BJ (cell line): ENCODE measurements at regions of chr10 and their contacts with region 1.

Region 1: GRCh38 chr10:101214446-101215396 is 14.5 kb downstream of the LBX1 start:
- DNase-seq: no peak
- H3K4me3 ChIP-seq: no peak overlapping the region
- H3K27me3 ChIP-seq: peaks cover 48% of the 10 kb centered on the region
- CTCF ChIP-seq: peak; percentile 93

Region 2: DNA sequence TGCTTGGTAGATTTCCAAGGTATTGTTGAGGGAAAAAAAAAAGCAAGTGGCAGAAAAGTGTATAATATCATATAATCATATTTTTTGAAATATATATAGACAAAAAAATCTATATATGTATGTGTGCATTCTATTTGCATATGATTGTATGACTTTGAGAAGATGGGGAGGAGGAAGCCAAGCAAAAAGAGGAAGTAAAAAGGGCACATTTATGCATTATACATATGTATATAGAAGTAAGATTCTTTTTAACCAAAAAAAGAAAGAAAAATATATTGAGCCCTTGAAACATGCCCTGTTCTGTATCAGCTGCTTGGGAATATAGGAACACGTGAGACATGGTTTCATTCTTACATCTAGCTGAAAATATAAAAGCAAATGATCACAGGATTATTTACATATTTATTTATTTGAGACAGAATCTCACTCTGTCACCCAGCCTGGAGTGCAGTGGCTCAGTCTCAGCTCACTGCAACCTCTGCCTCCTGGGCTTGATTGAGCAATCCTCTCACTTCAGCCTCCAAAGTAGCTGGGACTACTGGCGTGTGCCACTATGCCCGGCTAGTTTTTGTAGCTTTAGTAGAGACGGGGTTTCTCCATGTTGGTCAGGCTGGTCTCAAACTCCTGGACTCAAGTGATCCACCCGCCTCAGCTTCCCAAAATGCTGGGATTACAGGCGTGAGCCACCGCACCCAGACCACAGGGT is 320.0 kb before region 1 on chr10:
- CTCF ChIA-PET with region 1: no interaction called
- POLR2A ChIA-PET with region 1: no interaction called
- DNase-seq: no peak
- H3K4me3 ChIP-seq: no peak overlapping the region
- H3K27me3 ChIP-seq: no peaks in the 10 kb centered on the region
- CTCF ChIP-seq: no peak

Region 3: GRCh38 chr10:101120884-101121653 is 93.7 kb before region 1 on chr10:
- CTCF ChIA-PET with region 1: no interaction called
- POLR2A ChIA-PET with region 1: no interaction called
- DNase-seq: no peak
- H3K4me3 ChIP-seq: peak overlapping the region; percentile 16
- H3K27me3 ChIP-seq: peaks cover 60% of the 10 kb centered on the region
- CTCF ChIP-seq: no peak

Region 4: GRCh38 chr10:101161494-101162299 is 53.0 kb before region 1 on chr10:
- CTCF ChIA-PET with region 1: interaction called, 13 read pairs
- POLR2A ChIA-PET with region 1: no interaction called
- DNase-seq: peak; percentile 14
- H3K4me3 ChIP-seq: peak overlapping the region; percentile 38
- H3K27me3 ChIP-seq: peaks cover 12% of the 10 kb centered on the region; the same call in 1 of the 2 replicates
- CTCF ChIP-seq: peak; percentile 95

Region 5: GRCh38 chr10:101238732-101239105 is 24.0 kb after region 1 on chr10:
- CTCF ChIA-PET with region 1: interaction called, 14 read pairs
- POLR2A ChIA-PET with region 1: no interaction called
- DNase-seq: no peak
- H3K4me3 ChIP-seq: no peak overlapping the region
- H3K27me3 ChIP-seq: peaks cover 49% of the 10 kb centered on the region
- CTCF ChIP-seq: peak; percentile 22; the same call in 1 of the 2 replicates

Region 6: GRCh38 chr10:101291331-101292193 is 76.8 kb after region 1 on chr10:
- CTCF ChIA-PET with region 1: interaction called, 33 read pairs
- POLR2A ChIA-PET with region 1: no interaction called
- DNase-seq: no peak
- H3K4me3 ChIP-seq: peak overlapping the region; percentile 40
- H3K27me3 ChIP-seq: peaks cover 46% of the 10 kb centered on the region
- CTCF ChIP-seq: peak; percentile 69

Region 7: DNA sequence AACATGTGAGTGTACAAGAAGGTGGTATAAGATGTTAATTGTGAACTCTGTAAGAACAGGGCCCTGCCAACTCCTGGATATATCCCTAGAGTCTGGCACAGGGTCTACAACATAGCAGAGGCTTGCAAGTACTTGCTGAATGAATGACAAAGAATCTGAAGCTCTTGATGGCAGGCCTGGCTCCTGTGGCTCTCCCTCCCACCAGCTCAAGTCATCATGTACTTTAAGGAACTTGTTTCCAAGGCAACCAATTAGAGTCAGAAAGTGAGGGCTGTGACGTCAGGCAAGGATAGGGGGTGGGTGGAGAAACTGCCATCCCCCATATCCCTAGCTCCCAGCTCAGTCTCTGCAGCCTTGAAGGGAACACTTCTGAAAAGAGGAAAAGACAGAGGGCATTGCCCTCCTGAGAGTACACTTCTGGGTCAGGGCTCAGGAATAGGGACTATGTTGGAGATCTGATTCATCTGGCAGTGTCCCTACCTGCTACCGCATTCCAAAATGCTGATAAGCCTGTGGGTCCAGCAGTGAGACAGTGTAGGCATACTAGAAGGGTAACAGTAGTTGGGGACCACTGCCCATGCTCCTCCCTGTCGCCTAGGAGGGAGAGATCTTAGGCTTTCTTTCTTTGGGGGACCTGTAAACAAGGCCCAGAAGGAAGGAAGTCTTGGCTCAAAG is 104.7 kb after region 1 on chr10:
- CTCF ChIA-PET with region 1: no interaction called
- POLR2A ChIA-PET with region 1: no interaction called
- DNase-seq: no peak
- H3K4me3 ChIP-seq: no peak overlapping the region
- H3K27me3 ChIP-seq: peaks cover 17% of the 10 kb centered on the region
- CTCF ChIP-seq: no peak

Region 8: DNA sequence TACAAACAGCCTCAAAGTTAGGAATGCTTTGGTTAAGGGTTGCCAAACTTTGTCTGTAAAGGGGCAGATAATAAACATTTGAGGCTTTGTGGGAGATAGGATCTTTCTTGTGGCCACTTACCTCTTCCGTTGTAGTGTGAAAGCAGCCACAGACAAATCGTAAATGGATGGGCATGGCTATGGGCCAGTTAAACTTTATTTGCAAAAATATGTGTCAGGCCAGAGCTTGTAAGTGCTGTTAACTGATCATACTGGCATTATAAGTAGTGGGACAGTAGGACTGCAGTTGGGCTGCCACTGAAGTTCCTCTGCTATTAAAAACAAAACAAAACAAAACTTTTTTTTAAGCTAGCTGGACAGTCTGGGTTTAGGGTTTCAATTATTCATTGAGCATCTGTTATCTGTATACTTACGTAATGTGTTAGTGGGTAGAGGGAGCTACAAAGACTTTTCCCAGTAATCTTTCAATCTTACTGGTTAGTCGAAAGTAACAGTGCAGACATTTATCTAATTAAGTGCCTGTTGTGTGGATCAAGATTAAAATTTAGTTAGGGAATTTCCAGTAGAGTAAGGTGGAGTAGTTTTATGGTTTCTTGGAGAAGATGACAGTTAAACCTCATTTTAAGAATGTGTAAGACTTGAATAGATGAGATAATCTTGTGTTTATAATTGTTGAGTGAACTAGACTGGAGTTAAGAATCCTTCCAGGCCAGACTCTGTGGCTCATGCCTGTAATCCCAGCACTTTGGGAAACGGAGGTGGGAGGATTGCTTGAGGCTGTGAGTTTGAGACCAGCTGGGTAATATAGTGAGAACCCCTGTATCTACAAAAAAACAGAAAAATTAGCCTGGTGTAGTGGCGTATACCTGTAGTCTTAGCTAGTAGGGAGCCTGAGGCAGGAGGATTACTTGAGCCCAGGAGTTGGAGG is 239.3 kb after region 1 on chr10:
- CTCF ChIA-PET with region 1: interaction called, 11 read pairs
- POLR2A ChIA-PET with region 1: no interaction called
- DNase-seq: peak; percentile 17
- H3K4me3 ChIP-seq: no peak overlapping the region
- H3K27me3 ChIP-seq: no peaks in the 10 kb centered on the region
- CTCF ChIP-seq: no peak

Region 9: DNA sequence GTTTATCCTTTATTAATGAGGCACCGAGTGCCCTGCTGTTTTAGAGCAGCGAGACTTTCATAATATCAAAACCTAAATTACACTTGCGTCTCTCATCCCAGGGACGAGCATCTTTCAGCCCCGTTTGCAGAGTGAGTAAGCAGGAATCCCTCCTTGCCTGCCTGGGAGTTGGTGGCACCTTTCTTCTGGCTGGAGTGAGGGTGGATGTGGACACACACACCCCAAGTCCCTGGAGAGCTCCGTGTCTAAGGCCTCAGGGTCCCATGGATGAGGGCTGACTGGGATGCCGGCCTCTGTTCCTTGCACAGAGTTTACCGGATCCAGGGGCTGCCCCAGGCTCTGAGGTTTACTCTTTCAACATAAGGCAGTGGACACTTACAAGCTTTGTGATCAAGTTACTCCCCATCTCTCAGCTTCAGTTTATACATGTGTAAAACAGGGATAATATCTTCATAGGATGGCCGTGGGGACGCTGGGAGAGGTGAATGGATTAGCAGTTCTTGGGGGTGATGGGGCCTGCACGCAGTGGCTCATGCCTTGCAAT is 348.8 kb after region 1 on chr10:
- CTCF ChIA-PET with region 1: interaction called, 115 read pairs
- POLR2A ChIA-PET with region 1: no interaction called
- DNase-seq: no peak
- H3K4me3 ChIP-seq: no peak overlapping the region
- H3K27me3 ChIP-seq: peaks cover 24% of the 10 kb centered on the region
- CTCF ChIP-seq: no peak

Region 10: DNA sequence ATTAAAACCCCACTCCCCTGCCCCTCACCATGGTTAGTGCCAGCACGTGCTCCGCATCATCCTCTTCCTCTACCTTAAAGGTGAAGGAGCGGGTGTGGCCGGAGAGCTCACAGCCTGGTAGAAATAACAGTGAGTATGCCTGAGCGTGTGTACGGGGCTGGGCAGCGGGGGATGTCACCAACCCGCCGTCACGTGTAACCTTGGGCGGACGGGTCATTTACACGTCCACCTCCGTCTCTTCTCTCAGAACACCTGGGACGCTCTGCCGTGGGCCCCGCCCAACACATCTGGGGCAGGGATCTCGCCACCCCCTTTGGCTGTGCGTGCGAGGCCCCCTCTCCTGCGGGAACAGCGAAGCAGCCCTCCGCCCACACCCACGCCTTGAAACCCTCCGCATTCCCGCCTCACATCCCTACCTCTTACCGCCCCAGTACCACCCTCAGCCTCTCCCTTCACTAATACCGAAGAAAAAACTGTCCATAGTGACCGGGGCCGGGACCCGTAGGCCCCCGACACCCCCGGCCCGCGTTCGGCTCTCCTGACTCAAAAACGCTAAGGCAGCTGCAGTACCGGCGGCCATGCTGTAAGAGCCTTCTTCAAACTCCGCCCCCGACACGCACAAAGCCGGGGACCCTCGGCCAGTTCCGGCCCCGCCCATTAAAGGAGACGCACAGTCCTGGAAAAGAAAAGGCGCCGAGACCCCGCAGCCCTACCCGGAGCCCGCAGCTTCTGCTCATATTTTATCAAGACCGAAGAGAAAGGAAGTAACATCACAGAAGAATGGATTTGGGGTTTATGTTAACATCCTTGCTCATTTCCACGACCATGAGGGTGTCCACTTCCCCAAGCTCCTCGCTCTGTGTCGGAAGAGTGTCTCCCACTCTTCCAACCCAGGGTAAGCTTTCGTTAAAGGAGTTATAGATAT is 568.4 kb after region 1 on chr10 and contains the start of gene NPM3:
- CTCF ChIA-PET with region 1: interaction called, 77 read pairs
- POLR2A ChIA-PET with region 1: no interaction called
- DNase-seq: peak; percentile 17
- H3K4me3 ChIP-seq: peak within 1 kb of the TSS; percentile 77
- H3K27me3 ChIP-seq: no peaks in the 10 kb centered on the region
- CTCF ChIP-seq: no peak
- polyA plus RNA-seq, gene NPM3: 31.8 and 35.6 TPM in 2 replicates